Prostate gland (tissue), 2 donors: ENCODE measurements at regions of chr4 and their contacts with region 1.

Region 1: DNA sequence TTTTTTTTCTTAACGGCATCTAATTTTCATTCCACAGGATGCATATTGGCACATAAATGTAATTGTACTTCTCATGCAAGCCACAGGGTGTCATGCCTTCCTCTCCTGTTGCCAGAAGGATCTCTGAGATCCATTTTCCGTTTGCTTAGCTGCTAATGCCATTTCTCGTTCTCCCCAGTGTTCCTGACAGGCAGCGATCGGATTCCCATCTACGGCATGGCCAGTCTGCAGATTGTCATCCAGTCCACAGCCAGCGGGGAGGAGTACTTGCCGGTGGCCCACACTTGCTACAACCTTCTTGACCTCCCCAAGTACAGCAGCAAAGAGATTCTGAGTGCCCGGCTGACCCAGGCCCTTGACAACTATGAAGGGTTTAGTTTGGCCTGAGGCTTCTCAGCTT is 8.9 kb upstream of the NAP1L5 start:
- DNase-seq: peak; percentile 49
- H3K4me3 ChIP-seq: no peak overlapping the region
- H3K27ac ChIP-seq: peak overlapping the region; percentile 53 to 54
- H3K4me1 ChIP-seq: no peaks in the 10 kb centered on the region
- H3K27me3 ChIP-seq: no peaks in the 10 kb centered on the region
- CTCF ChIP-seq: peak in 3 of 4 experiments; percentile 59 to 75 (median 62)
- POLR2A ChIP-seq: no peak

Region 2: GRCh38 chr4:88803600-88804096 is 97.1 kb after region 1 on chr4:
- intact Hi-C with region 1: loop called (anchors 5 kb)
- DNase-seq: peak; percentile 76
- H3K4me3 ChIP-seq: no peak overlapping the region
- H3K27ac ChIP-seq: peak overlapping the region; percentile 14 to 48
- H3K4me1 ChIP-seq: no peaks in the 10 kb centered on the region
- H3K27me3 ChIP-seq: no peaks in the 10 kb centered on the region
- CTCF ChIP-seq: no peak
- POLR2A ChIP-seq: no peak

Region 3: GRCh38 chr4:88828842-88829571 is 122.4 kb after region 1 on chr4:
- intact Hi-C with region 1: loop called (anchors 5 kb)
- DNase-seq: no peak
- H3K4me3 ChIP-seq: no peak overlapping the region
- H3K27ac ChIP-seq: no peak overlapping the region
- H3K4me1 ChIP-seq: no peaks in the 10 kb centered on the region
- H3K27me3 ChIP-seq: no peaks in the 10 kb centered on the region
- CTCF ChIP-seq: no peak
- POLR2A ChIP-seq: no peak

Region 4: DNA sequence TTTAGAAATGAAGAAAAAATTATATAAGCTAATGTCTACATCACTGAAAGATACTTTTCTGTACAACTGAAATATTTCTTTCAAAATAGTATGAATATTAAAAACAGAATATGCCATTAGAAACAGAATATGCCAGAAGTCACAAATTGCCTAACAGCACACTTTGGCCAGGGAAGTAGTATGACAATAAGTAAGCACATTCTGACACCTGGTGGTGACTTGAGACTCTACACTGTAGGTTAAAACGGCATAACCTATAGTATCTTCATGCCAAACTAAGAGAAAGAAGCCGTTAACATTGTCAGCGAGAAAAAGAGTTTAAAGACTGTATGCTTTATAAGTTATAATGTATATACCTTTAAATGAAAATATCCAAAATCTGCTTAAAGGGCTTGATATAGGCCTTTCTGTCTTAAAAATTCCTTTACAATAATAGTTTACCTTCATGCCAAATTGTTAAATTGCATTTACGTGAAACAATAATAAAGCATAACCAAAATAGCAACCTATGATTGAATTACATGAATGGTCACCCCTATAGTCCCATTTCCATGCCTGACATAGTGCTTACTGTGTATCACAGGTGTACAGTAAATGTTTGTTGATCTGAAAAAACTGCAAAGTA is 317.6 kb after region 1 on chr4:
- intact Hi-C with region 1: loop called (anchors 5 kb)
- DNase-seq: peak; percentile 69
- H3K4me3 ChIP-seq: no peak overlapping the region
- H3K27ac ChIP-seq: no peak overlapping the region
- H3K4me1 ChIP-seq: no peaks in the 10 kb centered on the region
- H3K27me3 ChIP-seq: no peaks in the 10 kb centered on the region
- CTCF ChIP-seq: peak; percentile 67 to 93 (median 89)
- POLR2A ChIP-seq: no peak